Sigmoid colon (tissue), 7 donors: ENCODE measurements at regions of chr7 and their contacts with region 1.

Region 1: GRCh38 chr7:41705109-41705901 is 2.4 kb upstream of the INHBA start:
- DNase-seq: peak; percentile 90
- H3K4me3 ChIP-seq: peak overlapping the region; percentile 30 to 60 (median 52)
- H3K27ac ChIP-seq: peak overlapping the region; percentile 66 to 86 (median 80)
- H3K4me1 ChIP-seq: peaks cover 0 to 21% (median 14%) of the 10 kb centered on the region in 4 donors
- H3K27me3 ChIP-seq: no peaks in the 10 kb centered on the region
- CTCF ChIP-seq: peak in 3 of 4 experiments; percentile 21 to 60 (median 57)
- EP300 ChIP-seq: no peak
- POLR2A ChIP-seq: no peak

Region 2: GRCh38 chr7:40763318-40764287 is 941.7 kb before region 1 on chr7:
- intact Hi-C with region 1: loop called (anchors 5 kb)
- DNase-seq: no peak
- H3K4me3 ChIP-seq: no peak overlapping the region
- H3K27ac ChIP-seq: peak overlapping the region in 2 of 4 donors; percentile 42 to 80
- H3K4me1 ChIP-seq: peaks cover 0 to 26% (median 12%) of the 10 kb centered on the region in 4 donors
- H3K27me3 ChIP-seq: no peaks in the 10 kb centered on the region
- CTCF ChIP-seq: no peak
- EP300 ChIP-seq: no peak
- POLR2A ChIP-seq: no peak

Region 3: DNA sequence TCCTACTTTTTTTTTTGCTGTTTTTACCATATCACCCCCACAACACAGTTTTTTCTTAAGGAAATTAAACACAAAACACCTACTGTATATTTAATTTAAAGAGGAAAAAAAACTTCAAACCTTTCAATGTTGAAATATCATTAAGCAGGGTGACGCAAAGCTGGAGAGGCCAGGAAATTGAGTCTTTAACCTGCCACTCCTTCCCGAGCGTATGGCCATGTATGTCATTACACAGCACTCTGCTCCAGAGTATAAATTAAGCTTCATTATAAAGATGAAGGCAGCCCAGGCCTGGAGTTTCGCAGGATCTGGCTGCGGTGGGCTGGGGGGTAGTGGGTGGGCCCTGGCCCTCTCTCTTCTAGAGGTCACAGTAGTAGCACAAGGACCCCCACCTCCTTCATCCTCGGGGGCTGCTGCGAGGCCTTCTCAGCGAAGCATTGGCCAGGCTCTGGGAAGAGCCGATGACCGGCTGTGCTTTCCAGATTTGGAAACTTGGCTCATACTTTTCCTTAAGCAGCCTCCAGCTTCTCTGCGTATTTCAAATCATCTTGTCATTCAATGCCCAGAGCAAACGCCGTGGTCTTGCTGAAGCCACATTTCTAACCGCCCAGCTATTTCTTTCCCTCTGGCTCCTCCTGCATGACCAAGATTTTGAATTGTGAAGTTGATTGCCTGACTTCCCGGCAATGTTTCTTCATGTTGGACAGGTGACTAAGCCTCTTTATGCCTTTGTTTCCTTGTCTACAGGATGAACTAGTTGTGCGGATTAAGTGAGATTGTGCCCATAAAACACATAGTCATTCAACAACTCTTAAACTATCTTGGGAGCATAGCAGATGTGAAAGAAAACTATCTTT is 805.4 kb before region 1 on chr7:
- intact Hi-C with region 1: loop called (anchors 10 kb)
- DNase-seq: peak; percentile 77
- H3K4me3 ChIP-seq: peak overlapping the region in 2 of 4 donors; percentile 3 to 27
- H3K27ac ChIP-seq: peak overlapping the region; percentile 57 to 81 (median 68)
- H3K4me1 ChIP-seq: peaks cover 0 to 28% (median 22%) of the 10 kb centered on the region in 4 donors
- H3K27me3 ChIP-seq: no peaks in the 10 kb centered on the region
- CTCF ChIP-seq: no peak
- EP300 ChIP-seq: no peak
- POLR2A ChIP-seq: no peak

Region 4: DNA sequence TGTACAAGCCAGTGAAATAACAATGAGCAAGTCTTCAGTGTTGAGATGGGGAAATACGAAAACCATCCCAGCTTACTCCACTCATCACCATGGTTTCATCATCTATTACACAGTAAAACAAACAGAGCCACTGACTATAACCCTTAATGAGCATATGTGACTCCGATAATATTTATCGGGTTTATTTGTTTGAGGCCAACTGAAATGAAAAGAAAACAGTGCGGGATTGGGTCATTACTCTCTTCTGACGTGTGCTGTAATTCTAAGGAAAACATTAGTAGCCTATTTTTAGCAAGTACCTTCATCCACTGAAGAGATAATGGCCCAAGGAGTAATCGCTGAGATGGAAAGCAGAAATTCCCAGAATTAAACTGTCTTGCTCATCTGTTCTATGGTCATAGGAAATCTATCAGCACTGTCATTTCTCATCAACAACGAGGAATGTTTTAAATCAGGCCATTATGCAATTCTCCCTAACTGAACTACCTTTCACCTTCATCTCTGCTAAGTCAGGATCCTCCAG is 718.9 kb before region 1 on chr7:
- intact Hi-C with region 1: loop called (anchors 10 kb)
- DNase-seq: no peak
- H3K4me3 ChIP-seq: no peak overlapping the region
- H3K27ac ChIP-seq: peak overlapping the region in 3 of 4 donors; percentile 7 to 75 (median 38)
- H3K4me1 ChIP-seq: no peaks in the 10 kb centered on the region
- H3K27me3 ChIP-seq: no peaks in the 10 kb centered on the region
- CTCF ChIP-seq: no peak
- EP300 ChIP-seq: no peak
- POLR2A ChIP-seq: no peak

Region 5: DNA sequence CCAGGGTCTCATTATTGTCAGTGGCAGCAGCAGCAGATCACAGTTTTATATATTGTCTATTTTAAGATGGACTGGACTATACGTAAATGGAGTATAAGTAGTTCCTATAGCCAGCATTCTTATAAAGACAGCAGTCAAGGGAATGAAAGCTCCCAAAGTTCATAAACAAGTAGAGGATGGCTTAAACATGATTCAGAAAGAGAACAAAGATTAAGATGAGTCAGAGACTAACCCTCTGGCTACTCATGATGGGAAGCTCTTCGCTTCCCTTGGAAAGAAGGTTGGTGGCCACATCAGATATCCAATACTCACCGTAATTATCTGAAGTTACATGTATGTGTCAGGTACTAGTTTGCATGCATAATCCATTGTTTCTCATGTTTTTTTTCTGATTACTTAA is 279.4 kb before region 1 on chr7:
- intact Hi-C with region 1: no loop called
- DNase-seq: no peak
- H3K4me3 ChIP-seq: no peak overlapping the region
- H3K27ac ChIP-seq: no peak overlapping the region
- H3K4me1 ChIP-seq: no peaks in the 10 kb centered on the region
- H3K27me3 ChIP-seq: no peaks in the 10 kb centered on the region
- CTCF ChIP-seq: no peak
- EP300 ChIP-seq: no peak
- POLR2A ChIP-seq: no peak

Region 6: DNA sequence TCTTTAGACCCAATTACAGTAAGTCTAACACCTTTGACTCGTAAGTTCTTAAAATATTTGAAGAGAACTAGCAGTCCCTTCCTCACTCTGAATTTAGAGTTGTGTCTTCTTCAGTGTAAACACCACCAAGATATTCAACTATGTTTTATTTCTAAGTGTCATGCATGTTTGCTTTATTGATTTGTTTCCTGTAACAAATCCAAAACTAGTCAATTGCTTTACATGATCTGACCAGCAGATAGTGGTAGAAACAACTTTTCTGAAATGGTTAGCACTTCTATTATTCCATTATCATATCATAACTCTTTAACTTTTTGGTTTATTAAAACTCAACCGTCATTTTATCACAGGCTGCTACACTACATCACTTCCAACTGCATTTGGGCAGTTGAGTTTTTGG is 92.5 kb before region 1 on chr7:
- intact Hi-C with region 1: no loop called
- DNase-seq: no peak
- H3K4me3 ChIP-seq: no peak overlapping the region
- H3K27ac ChIP-seq: no peak overlapping the region
- H3K4me1 ChIP-seq: no peaks in the 10 kb centered on the region
- H3K27me3 ChIP-seq: no peaks in the 10 kb centered on the region
- CTCF ChIP-seq: no peak
- EP300 ChIP-seq: no peak
- POLR2A ChIP-seq: no peak

Region 7: DNA sequence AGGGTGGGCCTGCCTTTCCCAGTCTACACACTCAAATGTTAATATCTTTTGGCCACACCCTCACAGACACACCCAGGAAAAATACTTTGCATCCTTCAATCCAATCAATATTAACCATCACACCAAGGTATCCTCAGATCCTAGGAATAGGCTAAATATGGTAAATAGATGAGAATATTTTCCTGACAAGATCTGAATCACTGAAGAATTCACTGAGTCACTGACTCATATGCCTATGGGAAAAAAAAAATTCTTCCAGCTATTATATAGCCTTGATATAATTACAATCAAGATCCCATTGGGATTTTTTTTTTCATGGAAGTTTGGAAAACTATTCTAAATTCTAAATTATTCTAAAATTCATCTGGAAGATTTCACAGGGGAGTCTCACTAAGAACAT is 68.3 kb before region 1 on chr7:
- intact Hi-C with region 1: no loop called
- DNase-seq: no peak
- H3K4me3 ChIP-seq: no peak overlapping the region
- H3K27ac ChIP-seq: no peak overlapping the region
- H3K4me1 ChIP-seq: no peaks in the 10 kb centered on the region
- H3K27me3 ChIP-seq: no peaks in the 10 kb centered on the region
- CTCF ChIP-seq: no peak
- EP300 ChIP-seq: no peak
- POLR2A ChIP-seq: no peak